ENCODE measurements at regions of chrX and their contacts with region 1.

Region 1: GRCh38 chrX:118847676-118848075 is 24.1 kb downstream of the ZCCHC12 start:
- DNase-seq: no peak
- H3K4me3 Mint-ChIP-seq: no peak overlapping the region
- H3K27ac Mint-ChIP-seq: no peak overlapping the region
- H3K4me1 Mint-ChIP-seq: no peaks in the 10 kb centered on the region
- H3K27me3 Mint-ChIP-seq: peaks cover 6% of the 10 kb centered on the region

Region 2: DNA sequence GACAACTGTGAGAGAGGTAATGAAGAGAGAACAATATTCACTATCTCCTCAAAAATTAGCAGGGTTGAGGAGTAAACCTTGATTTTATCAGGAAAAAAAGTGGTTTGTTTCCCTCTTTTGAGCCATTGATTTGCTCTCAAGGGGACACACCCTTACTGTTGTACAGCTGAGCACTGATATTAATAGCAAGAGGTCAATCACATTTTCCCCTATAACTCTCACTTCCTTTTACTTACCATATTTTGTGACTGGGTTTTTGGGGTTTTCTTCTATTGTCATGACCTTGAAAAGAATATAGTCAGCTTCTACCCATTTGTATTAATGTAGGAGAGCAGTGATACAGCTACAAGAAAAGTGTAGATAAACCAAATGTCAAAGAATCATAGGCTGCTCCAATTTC is 56.5 kb after region 1 on chrX:
- intact Hi-C with region 1: no loop called
- DNase-seq: no peak
- H3K4me3 Mint-ChIP-seq: no peak overlapping the region
- H3K27ac Mint-ChIP-seq: no peak overlapping the region
- H3K4me1 Mint-ChIP-seq: no peaks in the 10 kb centered on the region
- H3K27me3 Mint-ChIP-seq: no peaks in the 10 kb centered on the region

Region 3: DNA sequence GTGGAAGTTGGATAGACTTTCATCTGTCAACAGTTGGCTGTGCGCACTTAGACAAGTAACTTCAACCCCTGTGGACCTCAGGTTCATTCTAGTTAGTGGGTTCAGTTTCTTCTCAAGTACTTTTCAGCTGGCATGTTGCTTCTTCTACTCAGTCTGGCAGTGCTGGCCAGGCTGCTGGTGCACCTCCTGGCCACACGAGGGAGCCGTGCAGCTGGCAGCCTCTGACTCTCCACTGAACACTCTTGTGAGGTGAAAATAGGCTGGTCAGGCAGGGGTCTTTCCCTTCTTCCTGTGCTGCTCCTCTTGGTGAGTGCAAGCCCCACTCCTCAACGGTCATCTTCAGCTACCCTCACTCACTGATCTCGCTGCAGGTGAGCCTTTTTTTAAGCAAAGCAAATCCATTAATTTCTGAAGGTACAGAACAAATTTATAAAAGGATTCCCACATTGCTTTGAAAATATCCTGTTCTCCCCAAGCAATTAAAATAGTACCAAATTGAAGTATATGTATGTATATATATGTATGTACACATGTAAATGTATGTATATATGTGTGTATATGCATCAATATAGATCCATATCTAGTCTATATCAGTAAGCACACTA is 157.3 kb after region 1 on chrX:
- intact Hi-C with region 1: loop called (anchors 2 kb)
- DNase-seq: peak; percentile 13
- H3K4me3 Mint-ChIP-seq: no peak overlapping the region
- H3K27ac Mint-ChIP-seq: no peak overlapping the region
- H3K4me1 Mint-ChIP-seq: no peaks in the 10 kb centered on the region
- H3K27me3 Mint-ChIP-seq: no peaks in the 10 kb centered on the region

Region 4: DNA sequence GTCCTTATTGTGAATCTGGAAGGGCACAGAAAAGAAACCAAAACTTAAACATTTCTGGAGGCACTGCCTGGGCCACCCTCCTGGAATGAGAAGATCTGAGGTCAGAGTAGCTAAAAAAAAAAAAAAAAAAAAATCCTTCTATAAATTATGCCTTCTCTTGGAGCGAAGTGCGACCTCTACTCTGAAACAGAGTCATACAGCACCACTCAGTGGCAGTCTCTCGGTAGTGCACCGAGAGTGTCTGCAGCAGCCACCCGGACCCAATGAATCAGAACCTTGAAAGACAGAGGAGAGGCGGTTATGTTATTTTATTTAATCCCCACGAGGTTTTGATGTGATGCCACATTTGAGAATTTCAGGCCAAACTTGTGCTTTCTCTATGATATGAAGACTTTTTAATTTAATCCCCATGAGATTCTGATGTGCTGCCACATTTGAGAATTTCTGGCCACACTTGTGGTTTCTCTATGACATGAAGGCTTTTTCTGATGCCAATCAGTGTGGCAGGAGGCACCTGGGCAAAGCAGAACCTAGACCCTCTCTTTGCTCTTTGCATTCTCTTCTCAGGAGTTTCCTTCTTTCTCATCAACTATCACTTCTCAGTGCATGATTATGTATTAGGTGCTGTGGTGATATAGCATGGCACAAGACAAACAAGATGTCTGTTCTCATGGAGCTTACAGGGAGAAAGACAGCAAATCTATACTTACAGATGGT is 219.5 kb after region 1 on chrX:
- intact Hi-C with region 1: loop called (anchors 5 kb)
- DNase-seq: peak; percentile 7
- H3K4me3 Mint-ChIP-seq: no peak overlapping the region
- H3K27ac Mint-ChIP-seq: no peak overlapping the region
- H3K4me1 Mint-ChIP-seq: no peaks in the 10 kb centered on the region
- H3K27me3 Mint-ChIP-seq: no peaks in the 10 kb centered on the region

Measured in activated T-helper 2 cell treated with anti-CD3 and anti-CD28 coated beads, Interferon-gamma antibody, Interleukin-2, Interleukin-4, amounts not matched to agents 10 μg/mL and 5 μg/mL and 100 μg/mL, durations not matched to agents 14 hours and 24 hours and 36 hours (primary cell).